ENCODE measurements at regions of chr4 and their contacts with region 1.

Region 1: GRCh38 chr4:174318829-174319764 is 35.4 kb downstream of the CEP44 start:
- DNase-seq: no peak
- ATAC-seq: no peak
- H3K4me3 Mint-ChIP-seq: no peak overlapping the region
- H3K27ac Mint-ChIP-seq: no peak overlapping the region
- H3K4me1 Mint-ChIP-seq: no peaks in the 10 kb centered on the region
- H3K27me3 Mint-ChIP-seq: no peaks in the 10 kb centered on the region

Region 2: GRCh38 chr4:174156239-174156826 is 162.8 kb before region 1 on chr4:
- CTCF ChIA-PET with region 1: no interaction called
- POLR2A ChIA-PET with region 1: no interaction called
- intact Hi-C with region 1: loop called in 1 of 2 experiments (anchors 5 kb)
- DNase-seq: no peak
- ATAC-seq: peak; percentile 68
- H3K4me3 Mint-ChIP-seq: no peak overlapping the region
- H3K27ac Mint-ChIP-seq: no peak overlapping the region
- H3K4me1 Mint-ChIP-seq: no peaks in the 10 kb centered on the region
- H3K27me3 Mint-ChIP-seq: peaks cover 22% of the 10 kb centered on the region

Region 3: DNA sequence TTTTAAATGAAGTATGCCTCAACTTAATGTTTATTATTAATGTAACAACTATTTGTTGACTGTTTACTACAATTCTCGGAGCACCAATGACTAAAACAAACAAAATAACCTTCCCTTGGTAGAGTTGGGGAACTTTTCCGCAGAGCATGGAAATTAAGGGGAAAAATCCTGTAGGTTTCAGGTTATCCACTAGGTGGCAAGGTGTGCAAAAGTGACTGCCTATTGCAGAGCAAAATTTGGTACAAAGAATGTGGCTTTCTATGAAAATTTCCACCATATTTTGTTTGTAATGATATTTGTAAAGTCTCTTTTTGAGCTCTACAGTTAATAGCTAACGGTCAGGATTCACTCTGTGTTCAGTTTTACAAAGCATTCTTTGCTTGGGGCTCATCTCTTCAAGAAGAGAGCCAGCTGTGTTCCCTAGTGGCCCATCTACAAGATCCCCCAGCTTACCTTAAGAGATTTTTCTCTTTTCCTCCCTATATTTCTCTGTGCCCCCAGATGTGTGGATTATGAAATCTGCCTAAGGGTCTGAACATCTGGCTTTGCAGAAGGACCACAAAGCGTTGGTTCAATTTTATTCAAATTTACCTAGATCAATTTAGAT is 96.7 kb before region 1 on chr4:
- CTCF ChIA-PET with region 1: interaction called, 10 read pairs
- POLR2A ChIA-PET with region 1: no interaction called
- intact Hi-C with region 1: loop called (anchors 1 kb)
- DNase-seq: no peak
- ATAC-seq: peak; percentile 64
- H3K4me3 Mint-ChIP-seq: no peak overlapping the region
- H3K27ac Mint-ChIP-seq: no peak overlapping the region
- H3K4me1 Mint-ChIP-seq: peaks cover 8% of the 10 kb centered on the region
- H3K27me3 Mint-ChIP-seq: peaks cover 41% of the 10 kb centered on the region

Region 4: GRCh38 chr4:174334628-174335027 is 15.5 kb after region 1 on chr4:
- CTCF ChIA-PET with region 1: no interaction called
- POLR2A ChIA-PET with region 1: no interaction called
- intact Hi-C with region 1: no loop called
- DNase-seq: no peak
- ATAC-seq: no peak
- H3K4me3 Mint-ChIP-seq: no peak overlapping the region
- H3K27ac Mint-ChIP-seq: no peak overlapping the region
- H3K4me1 Mint-ChIP-seq: no peaks in the 10 kb centered on the region
- H3K27me3 Mint-ChIP-seq: no peaks in the 10 kb centered on the region

Region 5: GRCh38 chr4:174437324-174437723 is 118.2 kb after region 1 on chr4:
- CTCF ChIA-PET with region 1: no interaction called
- POLR2A ChIA-PET with region 1: no interaction called
- intact Hi-C with region 1: no loop called
- DNase-seq: no peak
- ATAC-seq: no peak
- H3K4me3 Mint-ChIP-seq: no peak overlapping the region
- H3K27ac Mint-ChIP-seq: no peak overlapping the region
- H3K4me1 Mint-ChIP-seq: no peaks in the 10 kb centered on the region
- H3K27me3 Mint-ChIP-seq: no peaks in the 10 kb centered on the region

Region 6: DNA sequence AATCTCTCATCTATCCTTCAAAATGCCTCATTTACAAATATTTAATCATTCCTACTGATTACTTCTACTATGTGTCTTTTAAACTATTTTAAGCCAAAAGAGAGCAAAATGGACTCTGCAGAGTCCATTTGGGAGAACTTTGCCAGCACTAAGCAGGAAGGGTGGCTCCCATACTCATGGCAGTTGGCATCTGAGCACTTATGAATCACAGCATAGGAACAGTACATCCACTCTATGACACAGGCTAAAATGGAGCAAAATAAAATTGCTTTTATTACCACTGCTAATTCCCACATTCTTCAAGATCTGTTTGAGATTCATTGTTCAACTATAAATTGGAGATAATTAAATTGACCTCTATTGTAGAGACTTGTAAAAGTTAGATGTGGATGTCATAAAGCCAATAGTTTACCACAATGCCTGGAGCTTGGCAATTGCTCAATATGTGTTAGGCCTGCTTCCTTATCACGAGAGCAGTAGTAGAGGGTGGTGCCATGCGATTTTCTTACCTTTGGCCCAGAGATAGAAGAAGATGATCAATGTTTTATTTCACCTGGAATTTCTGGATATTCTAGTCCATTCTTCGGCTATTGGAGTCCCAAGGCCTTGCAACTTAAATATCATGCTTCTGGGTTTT is 184.1 kb after region 1 on chr4:
- CTCF ChIA-PET with region 1: no interaction called
- POLR2A ChIA-PET with region 1: no interaction called
- intact Hi-C with region 1: no loop called
- DNase-seq: no peak
- ATAC-seq: no peak
- H3K4me3 Mint-ChIP-seq: no peak overlapping the region
- H3K27ac Mint-ChIP-seq: no peak overlapping the region
- H3K4me1 Mint-ChIP-seq: peaks cover under 1% of the 10 kb centered on the region
- H3K27me3 Mint-ChIP-seq: peaks cover 3% of the 10 kb centered on the region

Region 7: DNA sequence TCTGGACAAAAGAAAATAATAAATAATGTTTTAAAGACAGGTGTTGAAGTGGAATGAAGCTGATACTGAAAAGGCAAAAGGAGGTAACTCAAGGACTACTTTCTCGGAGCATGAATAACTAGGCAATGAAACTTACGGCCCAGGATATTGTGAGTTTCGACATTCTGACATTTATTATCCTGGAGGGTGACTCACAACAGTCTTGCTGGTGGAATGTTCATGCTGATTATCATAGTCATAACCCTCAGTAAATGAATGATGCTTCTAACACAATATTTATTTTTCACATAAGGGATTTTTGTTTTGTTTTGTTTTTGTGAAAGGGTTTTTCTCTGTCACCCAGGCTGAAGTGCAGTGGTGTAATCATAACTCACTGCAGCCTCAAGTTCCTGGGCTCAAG is 350.2 kb after region 1 on chr4:
- CTCF ChIA-PET with region 1: no interaction called
- POLR2A ChIA-PET with region 1: no interaction called
- intact Hi-C with region 1: no loop called
- DNase-seq: no peak
- ATAC-seq: no peak
- H3K4me3 Mint-ChIP-seq: no peak overlapping the region
- H3K27ac Mint-ChIP-seq: no peak overlapping the region
- H3K4me1 Mint-ChIP-seq: no peaks in the 10 kb centered on the region
- H3K27me3 Mint-ChIP-seq: no peaks in the 10 kb centered on the region

Measured in activated CD4-positive, alpha-beta T cell treated with anti-CD3 and anti-CD28 coated beads for 36 hours (primary cell).